ENCODE measurements at regions of chr16 and their contacts with region 1.

Region 1: GRCh38 chr16:78503602-78504001 is 404.1 kb downstream of the WWOX start:
- DNase-seq: peak; percentile 9
- H3K4me3 Mint-ChIP-seq: no peak overlapping the region
- H3K27ac Mint-ChIP-seq: no peak overlapping the region
- H3K4me1 Mint-ChIP-seq: no peaks in the 10 kb centered on the region
- H3K27me3 Mint-ChIP-seq: no peaks in the 10 kb centered on the region

Region 2: GRCh38 chr16:78664811-78665772 is 161.5 kb after region 1 on chr16:
- intact Hi-C with region 1: no loop called
- DNase-seq: no peak
- H3K4me3 Mint-ChIP-seq: no peak overlapping the region
- H3K27ac Mint-ChIP-seq: no peak overlapping the region
- H3K4me1 Mint-ChIP-seq: no peaks in the 10 kb centered on the region
- H3K27me3 Mint-ChIP-seq: no peaks in the 10 kb centered on the region

Region 3: GRCh38 chr16:78770353-78771091 is 266.9 kb after region 1 on chr16:
- intact Hi-C with region 1: loop called (anchors 1 kb)
- DNase-seq: peak; percentile 65
- H3K4me3 Mint-ChIP-seq: peak overlapping the region; percentile 16
- H3K27ac Mint-ChIP-seq: peak overlapping the region; percentile 65
- H3K4me1 Mint-ChIP-seq: peaks cover 54% of the 10 kb centered on the region
- H3K27me3 Mint-ChIP-seq: no peaks in the 10 kb centered on the region

Region 4: DNA sequence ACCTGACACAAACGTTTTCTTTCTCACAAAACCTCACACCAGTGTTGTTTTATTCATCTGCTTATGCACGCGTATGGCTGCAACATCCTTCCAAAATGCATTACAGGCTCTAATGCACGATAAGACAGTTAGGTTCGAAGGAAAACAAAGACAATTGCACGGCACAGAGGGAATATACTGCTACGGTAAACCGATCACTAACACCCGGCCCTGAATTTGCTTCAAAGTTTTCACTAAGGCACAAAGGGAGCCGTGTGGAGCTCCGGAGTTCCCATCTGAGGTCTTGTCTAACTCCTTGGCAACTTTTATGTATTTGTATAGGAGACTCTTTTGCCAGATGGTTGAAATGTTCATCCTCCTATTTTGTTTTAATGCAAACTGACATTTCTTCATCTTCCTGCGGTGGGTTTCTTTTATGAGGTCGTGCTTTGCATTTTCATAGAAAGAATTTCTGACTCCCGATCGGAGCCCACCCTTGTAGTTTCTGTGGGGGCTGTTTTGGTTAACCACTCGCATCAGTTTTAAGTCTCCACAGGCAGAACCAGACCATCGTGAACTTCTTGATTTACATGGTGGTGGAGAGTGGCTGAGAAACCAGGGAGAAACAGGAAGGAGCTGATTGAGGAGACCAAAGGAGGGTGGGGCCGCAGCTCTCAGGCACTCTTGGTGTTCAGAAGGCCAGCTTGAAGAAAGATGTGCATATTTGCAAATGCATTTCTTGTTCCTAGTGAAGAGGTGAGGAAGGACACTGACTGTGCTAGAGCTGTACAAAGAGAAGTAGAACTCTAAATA is 580.1 kb after region 1 on chr16:
- intact Hi-C with region 1: no loop called
- DNase-seq: no peak
- H3K4me3 Mint-ChIP-seq: no peak overlapping the region
- H3K27ac Mint-ChIP-seq: no peak overlapping the region
- H3K4me1 Mint-ChIP-seq: peaks cover 42% of the 10 kb centered on the region
- H3K27me3 Mint-ChIP-seq: peaks cover 2% of the 10 kb centered on the region

Region 5: DNA sequence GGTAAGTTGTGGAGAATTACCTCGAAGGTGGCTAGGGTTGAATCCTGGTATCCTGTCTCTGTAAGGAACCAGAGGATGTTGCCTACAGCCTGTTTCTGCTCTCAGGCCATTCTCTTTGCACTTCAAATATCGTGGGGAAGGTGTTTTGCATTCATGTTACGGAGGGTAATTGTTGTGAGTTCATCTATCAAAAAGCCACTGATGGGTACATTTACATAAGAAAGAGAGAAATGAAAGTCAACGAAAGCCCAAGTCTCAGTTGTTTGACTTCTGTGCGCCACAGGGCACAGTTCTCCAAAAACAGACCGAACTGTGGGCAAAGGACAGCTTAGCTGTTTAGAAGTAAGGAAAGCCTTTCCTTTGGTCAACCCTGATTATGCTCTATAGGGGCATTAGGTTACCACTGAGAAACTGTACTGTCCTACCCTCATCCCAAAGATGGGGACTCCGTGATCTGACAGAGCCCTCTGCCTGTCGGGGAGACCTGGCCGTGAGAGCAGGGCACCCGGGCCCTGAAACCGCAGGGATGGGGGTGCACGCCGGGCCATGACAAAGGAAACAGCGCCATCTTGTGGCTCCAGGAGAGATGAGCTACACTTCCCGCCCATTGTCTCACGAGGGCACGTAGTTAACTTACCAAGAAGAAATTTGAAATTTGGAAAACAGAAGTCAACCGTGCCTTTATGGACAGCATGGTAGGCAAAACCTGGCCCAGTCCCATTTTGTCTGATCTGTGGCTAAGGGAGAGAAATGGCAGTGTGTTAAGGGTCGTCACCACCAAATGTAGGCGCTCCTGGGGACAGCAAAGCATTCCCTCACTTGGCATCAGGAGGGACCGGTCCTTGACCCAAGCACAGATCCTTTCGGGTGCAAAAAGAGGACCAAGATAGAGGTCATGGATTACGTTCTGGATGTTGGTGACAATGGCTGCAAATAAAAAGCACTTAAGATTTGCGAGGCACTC is 1962.7 kb after region 1 on chr16:
- intact Hi-C with region 1: loop called (anchors 1 kb)
- DNase-seq: peak; percentile 40
- H3K4me3 Mint-ChIP-seq: no peak overlapping the region
- H3K27ac Mint-ChIP-seq: no peak overlapping the region
- H3K4me1 Mint-ChIP-seq: no peaks in the 10 kb centered on the region
- H3K27me3 Mint-ChIP-seq: peaks cover 10% of the 10 kb centered on the region

Measured in activated T-helper 1 cell treated with anti-CD3 and anti-CD28 coated beads, Interleukin-12 subunit alpha, Interleukin-12 subunit beta, Interleukin-2, Interleukin-4 antibody, amounts not matched to agents 30 ng/mL and 10 ng/mL and 1 ng/mL, durations not matched to agents 14 hours and 24 hours and 36 hours (primary cell).